HEK293T (cell line): ENCODE measurements at regions of chr17 and their contacts with region 1.

Region 1: GRCh38 chr17:42659079-42659931 is at the start of gene TUBG2:
- DNase-seq: peak; percentile 87

Region 2: GRCh38 chr17:42647778-42648177 is 11.5 kb before region 1 on chr17:
- CTCF ChIA-PET with region 1: no interaction called
- POLR2A ChIA-PET with region 1: interaction called, 11 read pairs
- DNase-seq: no peak

Region 3: DNA sequence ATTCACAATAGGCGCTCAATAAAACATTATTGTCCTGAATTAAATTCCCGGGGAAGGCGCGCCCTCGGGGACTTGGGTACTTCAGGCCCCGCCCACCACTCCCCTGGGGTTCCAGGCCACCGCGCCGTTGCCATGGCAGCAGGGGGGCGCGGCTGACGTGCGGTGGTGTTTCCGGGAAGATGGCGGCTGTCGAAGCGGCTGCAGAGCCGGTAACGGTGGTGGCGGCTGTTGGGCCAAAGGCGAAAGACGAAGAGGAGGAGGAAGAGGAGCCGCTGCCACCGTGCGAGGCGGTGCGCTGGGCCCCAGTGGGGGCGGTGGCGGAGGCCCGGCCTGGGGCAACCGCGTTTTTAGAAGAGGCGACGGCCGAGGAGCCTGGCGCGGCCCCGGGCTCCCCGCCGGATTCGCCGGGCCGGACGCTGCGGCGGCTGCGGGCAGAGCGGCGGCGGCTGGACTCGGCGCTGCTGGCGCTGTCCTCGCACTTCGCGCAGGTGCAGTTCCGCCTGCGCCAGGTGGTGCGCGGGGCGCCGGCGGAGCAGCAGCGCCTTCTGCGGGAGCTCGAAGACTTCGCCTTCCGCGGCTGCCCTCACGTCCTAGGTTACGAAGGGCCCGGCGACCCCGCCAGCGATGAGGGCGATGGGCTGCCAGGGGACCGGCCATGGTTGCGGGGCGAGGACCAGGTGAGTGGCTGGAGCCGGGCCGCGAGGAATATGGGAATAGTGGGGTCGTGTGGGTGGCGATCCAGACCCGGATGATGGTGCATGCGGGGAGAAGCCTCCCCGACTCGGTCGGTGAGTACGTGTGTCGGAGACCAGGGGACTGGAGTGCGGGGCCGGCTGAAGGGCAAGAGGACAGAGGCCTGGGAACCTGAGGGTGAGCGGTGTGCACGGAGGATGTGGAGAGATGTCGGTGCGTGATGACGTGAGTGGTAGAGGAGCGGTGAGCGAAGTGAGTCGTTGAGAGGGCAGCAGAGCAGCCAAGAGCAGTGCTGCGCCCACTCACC is 321.4 kb after region 1 on chr17 and contains the start of gene RUNDC1:
- CTCF ChIA-PET with region 1: no interaction called
- POLR2A ChIA-PET with region 1: no interaction called
- DNase-seq: peak; percentile 93